ENCODE measurements at regions of chr9 and their contacts with region 1.

Region 1: DNA sequence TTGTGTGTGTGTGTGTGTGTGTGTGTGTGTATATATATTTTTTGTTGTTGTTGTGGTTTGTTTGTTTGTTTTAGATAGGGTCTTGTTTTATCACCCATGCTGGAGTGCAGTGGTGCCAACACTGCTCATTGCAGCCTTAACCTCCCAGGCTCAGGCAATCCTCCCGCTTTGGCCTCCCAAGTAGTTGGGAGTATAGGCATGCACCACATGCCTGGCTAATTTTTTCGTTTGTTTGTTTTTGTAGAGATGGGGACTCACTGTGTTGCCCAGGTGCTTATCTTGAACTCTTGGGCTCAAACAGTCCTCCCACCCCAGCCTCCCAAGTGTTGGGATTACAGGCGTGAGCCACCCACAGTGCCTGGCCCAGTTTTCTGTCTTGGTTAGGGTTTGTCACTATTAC is 77.3 kb downstream of the GAPVD1 start:
- DNase-seq: no peak
- ATAC-seq: no peak
- H3K4me3 ChIP-seq: no peak overlapping the region
- H3K27ac ChIP-seq: no peak overlapping the region
- H3K4me1 ChIP-seq: no peaks in the 10 kb centered on the region
- H3K27me3 ChIP-seq: no peaks in the 10 kb centered on the region
- CTCF ChIP-seq: no peak
- POLR2A ChIP-seq: no peak

Region 2: GRCh38 chr9:125227761-125228160 is 111.2 kb before region 1 on chr9:
- in situ Hi-C with region 1: no loop called
- intact Hi-C with region 1: no loop called
- DNase-seq: no peak
- ATAC-seq: no peak
- H3K4me3 ChIP-seq: no peak overlapping the region
- H3K27ac ChIP-seq: no peak overlapping the region
- H3K4me1 ChIP-seq: no peaks in the 10 kb centered on the region
- H3K27me3 ChIP-seq: no peaks in the 10 kb centered on the region
- CTCF ChIP-seq: no peak
- POLR2A ChIP-seq: no peak

Region 3: GRCh38 chr9:125325831-125326230 is 13.1 kb before region 1 on chr9:
- in situ Hi-C with region 1: no loop called
- intact Hi-C with region 1: loop called (anchors 2 kb)
- DNase-seq: no peak
- ATAC-seq: no peak
- H3K4me3 ChIP-seq: no peak overlapping the region
- H3K27ac ChIP-seq: no peak overlapping the region
- H3K4me1 ChIP-seq: no peaks in the 10 kb centered on the region
- H3K27me3 ChIP-seq: no peaks in the 10 kb centered on the region
- CTCF ChIP-seq: no peak
- POLR2A ChIP-seq: no peak

Measured in gastrocnemius medialis (tissue), 4 donors.